Activated B cell treated with CpG ODN at 0.5 μM for 24 hours (primary cell): ENCODE measurements at regions of chr18 and their contacts with region 1.

Region 1: DNA sequence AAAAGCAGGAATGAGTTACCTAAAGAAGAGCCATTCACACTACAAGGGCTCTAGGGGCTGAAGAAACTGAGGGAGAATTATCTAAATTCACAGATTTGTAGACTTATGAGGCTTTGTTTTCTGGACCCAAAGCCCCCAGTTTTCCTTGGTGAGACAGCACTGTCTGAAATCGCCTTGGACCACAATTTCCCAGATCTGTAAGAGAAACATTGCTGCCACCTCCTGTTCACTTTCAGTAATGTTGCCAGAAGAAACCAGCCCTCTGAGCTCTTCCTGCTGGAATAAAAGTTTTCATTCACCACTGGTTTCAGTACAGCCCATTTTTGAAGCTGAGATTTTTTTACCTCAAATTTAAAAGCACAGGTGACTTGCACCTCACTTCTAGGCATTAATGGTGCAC is 169.2 kb downstream of the CDH20 start:
- DNase-seq: no peak
- ATAC-seq: no peak
- H3K4me3 Mint-ChIP-seq: no peak overlapping the region
- H3K27ac Mint-ChIP-seq: no peak overlapping the region
- H3K4me1 Mint-ChIP-seq: no peaks in the 10 kb centered on the region
- H3K27me3 Mint-ChIP-seq: peaks cover 10% of the 10 kb centered on the region
- CTCF ChIP-seq: no peak

Region 2: GRCh38 chr18:59988098-59988706 is 1514.3 kb before region 1 on chr18:
- CTCF ChIA-PET with region 1: interaction called, 11 read pairs
- POLR2A ChIA-PET with region 1: no interaction called
- intact Hi-C with region 1: no loop called
- DNase-seq: no peak
- ATAC-seq: peak; percentile 64
- H3K4me3 Mint-ChIP-seq: no peak overlapping the region
- H3K27ac Mint-ChIP-seq: no peak overlapping the region
- H3K4me1 Mint-ChIP-seq: no peaks in the 10 kb centered on the region
- H3K27me3 Mint-ChIP-seq: peaks cover 17% of the 10 kb centered on the region
- CTCF ChIP-seq: peak; percentile 100

Region 3: DNA sequence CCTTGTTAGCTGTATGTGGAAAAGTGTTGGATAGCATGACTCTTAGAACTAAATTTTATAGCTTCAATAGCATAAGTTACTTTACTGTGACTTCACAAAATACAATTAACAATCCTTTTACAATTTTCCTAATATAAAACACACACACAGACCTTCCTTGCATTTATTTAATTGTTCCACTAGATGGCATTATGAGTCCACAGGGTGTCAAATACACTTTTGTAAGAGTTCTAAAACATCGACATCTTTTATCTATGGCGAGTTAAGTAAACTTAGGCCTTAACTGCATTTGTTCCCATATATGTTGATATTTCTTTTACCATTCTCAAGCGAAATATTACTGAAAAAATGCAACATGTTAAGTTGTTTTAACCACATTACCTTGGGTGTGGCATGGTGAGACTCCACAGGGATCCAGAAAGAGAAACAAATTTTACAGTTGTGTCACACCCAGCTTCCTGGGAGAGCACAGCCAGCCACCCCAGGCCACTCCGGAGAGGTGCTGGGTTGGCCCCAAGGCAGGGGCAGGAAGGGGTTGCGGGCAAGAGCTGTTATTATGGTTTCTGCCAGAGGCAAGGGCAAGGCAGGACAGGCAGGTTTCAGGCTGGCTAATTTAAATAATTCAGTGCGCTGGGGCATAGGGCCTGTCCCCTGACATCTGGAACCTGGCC is 817.5 kb before region 1 on chr18:
- CTCF ChIA-PET with region 1: no interaction called
- POLR2A ChIA-PET with region 1: no interaction called
- intact Hi-C with region 1: loop called (anchors 2 kb)
- DNase-seq: no peak
- ATAC-seq: no peak
- H3K4me3 Mint-ChIP-seq: no peak overlapping the region
- H3K27ac Mint-ChIP-seq: no peak overlapping the region
- H3K4me1 Mint-ChIP-seq: no peaks in the 10 kb centered on the region
- H3K27me3 Mint-ChIP-seq: no peaks in the 10 kb centered on the region
- CTCF ChIP-seq: no peak

Region 4: GRCh38 chr18:61308795-61309393 is 193.6 kb before region 1 on chr18:
- CTCF ChIA-PET with region 1: no interaction called
- POLR2A ChIA-PET with region 1: no interaction called
- intact Hi-C with region 1: no loop called
- DNase-seq: no peak
- ATAC-seq: no peak
- H3K4me3 Mint-ChIP-seq: no peak overlapping the region
- H3K27ac Mint-ChIP-seq: no peak overlapping the region
- H3K4me1 Mint-ChIP-seq: no peaks in the 10 kb centered on the region
- H3K27me3 Mint-ChIP-seq: no peaks in the 10 kb centered on the region
- CTCF ChIP-seq: no peak

Region 5: DNA sequence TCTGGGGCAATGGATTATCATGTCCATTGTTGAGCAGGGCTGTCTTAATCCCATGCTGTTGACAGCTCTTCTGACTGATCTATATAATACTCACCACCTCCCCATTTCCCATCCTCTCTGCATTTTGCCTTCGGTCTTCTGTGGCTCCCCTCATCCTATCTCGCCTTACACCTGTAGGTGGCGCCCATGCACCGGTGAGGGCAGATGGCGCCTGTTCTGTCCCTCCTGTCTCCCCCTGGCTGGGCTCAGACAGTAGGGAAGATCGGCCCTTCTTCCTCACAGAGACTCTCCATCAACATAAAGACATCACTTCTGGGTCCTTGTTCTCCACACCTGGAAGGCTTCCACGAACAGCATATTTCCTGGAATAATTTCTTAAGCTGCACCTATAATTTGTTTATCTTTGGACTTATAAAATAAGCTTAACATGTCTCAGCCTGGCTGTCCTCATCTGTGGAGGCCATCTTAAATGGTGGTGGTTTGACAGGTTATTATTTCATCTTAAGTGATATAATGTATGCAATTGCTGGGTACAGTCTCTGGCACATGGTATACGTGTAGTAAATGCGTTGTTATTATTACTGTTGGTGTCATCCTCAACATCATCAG is 180.1 kb before region 1 on chr18:
- CTCF ChIA-PET with region 1: interaction called, 67 read pairs
- POLR2A ChIA-PET with region 1: no interaction called
- intact Hi-C with region 1: loop called (anchors 1 kb)
- DNase-seq: no peak
- ATAC-seq: peak; percentile 42
- H3K4me3 Mint-ChIP-seq: no peak overlapping the region
- H3K27ac Mint-ChIP-seq: no peak overlapping the region
- H3K4me1 Mint-ChIP-seq: no peaks in the 10 kb centered on the region
- H3K27me3 Mint-ChIP-seq: peaks cover 1% of the 10 kb centered on the region
- CTCF ChIP-seq: no peak

Region 6: GRCh38 chr18:61569176-61569892 is 66.9 kb after region 1 on chr18:
- CTCF ChIA-PET with region 1: no interaction called
- POLR2A ChIA-PET with region 1: no interaction called
- intact Hi-C with region 1: no loop called
- DNase-seq: no peak
- ATAC-seq: no peak
- H3K4me3 Mint-ChIP-seq: no peak overlapping the region
- H3K27ac Mint-ChIP-seq: no peak overlapping the region
- H3K4me1 Mint-ChIP-seq: no peaks in the 10 kb centered on the region
- H3K27me3 Mint-ChIP-seq: peaks cover 5% of the 10 kb centered on the region
- CTCF ChIP-seq: no peak